WTC11 (cell line): ENCODE measurements at regions of chr1 and their contacts with region 1.

Region 1: GRCh38 chr1:183281553-183282091 is 95.6 kb downstream of the LAMC2 start:
- DNase-seq: peak; percentile 96
- ATAC-seq: peak; percentile 87
- H3K4me3 Mint-ChIP-seq: no peak overlapping the region
- H3K27ac Mint-ChIP-seq: peak overlapping the region; percentile 48; the same call in 1 of the 2 replicates
- H3K4me1 Mint-ChIP-seq: peaks cover 42% of the 10 kb centered on the region
- H3K27me3 Mint-ChIP-seq: no peaks in the 10 kb centered on the region
- CTCF ChIP-seq: peak; percentile 81

Region 2: DNA sequence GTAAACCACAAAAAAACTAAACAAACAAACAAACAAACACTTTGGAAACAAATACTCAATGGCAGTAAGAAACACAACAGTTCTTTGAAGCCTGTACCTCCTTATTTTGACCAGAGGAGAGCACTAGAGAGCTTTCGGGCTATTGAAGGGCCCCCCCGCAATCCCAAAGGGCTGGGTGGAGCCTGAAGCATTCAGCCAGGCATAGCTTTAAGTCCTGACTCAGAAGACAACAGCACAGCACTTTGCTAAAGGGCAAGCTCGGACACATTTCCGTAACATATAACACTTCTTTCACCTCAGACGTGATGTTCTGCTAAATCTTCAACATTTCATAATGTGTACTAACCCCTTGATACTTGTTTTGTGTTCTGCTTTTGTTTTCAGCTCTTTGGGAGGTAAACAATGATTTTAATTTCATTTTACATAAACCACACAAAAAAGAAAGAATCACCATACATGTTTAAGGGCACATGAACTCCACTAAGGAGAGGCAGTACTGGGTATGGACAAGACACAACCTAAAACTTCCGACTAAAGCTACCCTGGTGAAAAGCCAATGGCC is 319.0 kb before region 1 on chr1:
- CTCF ChIA-PET with region 1: interaction called, 12 read pairs
- POLR2A ChIA-PET with region 1: no interaction called
- DNase-seq: peak; percentile 69
- ATAC-seq: peak; percentile 87
- H3K4me3 Mint-ChIP-seq: peak overlapping the region; percentile 5; the same call in 1 of the 2 replicates
- H3K27ac Mint-ChIP-seq: peak overlapping the region; percentile 84
- H3K4me1 Mint-ChIP-seq: peaks cover 34% of the 10 kb centered on the region
- H3K27me3 Mint-ChIP-seq: peaks cover 12% of the 10 kb centered on the region
- CTCF ChIP-seq: peak; percentile 64

Region 3: GRCh38 chr1:183198463-183198862 is 83.2 kb before region 1 on chr1:
- CTCF ChIA-PET with region 1: no interaction called
- POLR2A ChIA-PET with region 1: no interaction called
- DNase-seq: no peak
- ATAC-seq: no peak
- H3K4me3 Mint-ChIP-seq: no peak overlapping the region
- H3K27ac Mint-ChIP-seq: peak overlapping the region; percentile 24; the same call in 1 of the 2 replicates
- H3K4me1 Mint-ChIP-seq: peaks cover 29% of the 10 kb centered on the region
- H3K27me3 Mint-ChIP-seq: no peaks in the 10 kb centered on the region
- CTCF ChIP-seq: no peak

Region 4: GRCh38 chr1:183227963-183228649 is 53.5 kb before region 1 on chr1:
- CTCF ChIA-PET with region 1: interaction called, 10 read pairs
- POLR2A ChIA-PET with region 1: no interaction called
- DNase-seq: peak; percentile 85
- ATAC-seq: peak; percentile 95
- H3K4me3 Mint-ChIP-seq: no peak overlapping the region
- H3K27ac Mint-ChIP-seq: no peak overlapping the region
- H3K4me1 Mint-ChIP-seq: peaks cover 26% of the 10 kb centered on the region
- H3K27me3 Mint-ChIP-seq: no peaks in the 10 kb centered on the region
- CTCF ChIP-seq: peak; percentile 60

Region 5: GRCh38 chr1:183263886-183264593 is 17.6 kb before region 1 on chr1:
- CTCF ChIA-PET with region 1: no interaction called
- POLR2A ChIA-PET with region 1: no interaction called
- DNase-seq: no peak
- ATAC-seq: no peak
- H3K4me3 Mint-ChIP-seq: no peak overlapping the region
- H3K27ac Mint-ChIP-seq: no peak overlapping the region
- H3K4me1 Mint-ChIP-seq: peaks cover 25% of the 10 kb centered on the region
- H3K27me3 Mint-ChIP-seq: no peaks in the 10 kb centered on the region
- CTCF ChIP-seq: no peak

Region 6: GRCh38 chr1:183291802-183292514 is 10.3 kb after region 1 on chr1:
- CTCF ChIA-PET with region 1: interaction called, 21 read pairs
- POLR2A ChIA-PET with region 1: no interaction called
- DNase-seq: no peak
- ATAC-seq: peak; percentile 78
- H3K4me3 Mint-ChIP-seq: no peak overlapping the region
- H3K27ac Mint-ChIP-seq: peak overlapping the region; percentile 71
- H3K4me1 Mint-ChIP-seq: peaks cover 29% of the 10 kb centered on the region
- H3K27me3 Mint-ChIP-seq: no peaks in the 10 kb centered on the region; the same call in 1 of the 2 replicates
- CTCF ChIP-seq: no peak

Region 7: GRCh38 chr1:183306317-183307042 is 24.9 kb after region 1 on chr1:
- CTCF ChIA-PET with region 1: interaction called, 25 read pairs
- POLR2A ChIA-PET with region 1: no interaction called
- DNase-seq: no peak
- ATAC-seq: peak; percentile 68
- H3K4me3 Mint-ChIP-seq: no peak overlapping the region
- H3K27ac Mint-ChIP-seq: no peak overlapping the region
- H3K4me1 Mint-ChIP-seq: peaks cover 51% of the 10 kb centered on the region
- H3K27me3 Mint-ChIP-seq: peaks cover 3% of the 10 kb centered on the region
- CTCF ChIP-seq: peak; percentile 32; the same call in 1 of the 2 replicates

Region 8: DNA sequence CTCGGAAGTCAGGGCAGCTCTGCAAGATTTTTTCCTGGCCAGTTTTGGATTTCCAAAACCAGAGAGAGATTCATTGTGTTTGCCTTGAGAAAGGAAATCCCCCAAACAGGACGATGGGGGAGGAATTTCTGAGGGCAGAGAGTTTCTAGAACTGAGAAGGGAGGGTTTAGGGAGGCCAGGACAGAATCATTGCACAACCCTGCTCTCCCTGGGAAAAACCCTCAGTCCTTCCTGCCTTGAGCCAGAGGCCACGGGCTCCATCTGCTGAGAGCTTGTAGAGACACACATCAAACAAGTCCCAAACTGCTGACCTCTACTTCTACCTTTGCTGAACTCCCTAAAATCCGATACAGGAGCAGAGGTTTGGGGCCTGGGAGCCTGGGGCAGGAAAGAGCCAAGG is 36.8 kb after region 1 on chr1:
- CTCF ChIA-PET with region 1: interaction called, 27 read pairs
- POLR2A ChIA-PET with region 1: no interaction called
- DNase-seq: peak; percentile 45
- ATAC-seq: peak; percentile 76
- H3K4me3 Mint-ChIP-seq: no peak overlapping the region
- H3K27ac Mint-ChIP-seq: no peak overlapping the region
- H3K4me1 Mint-ChIP-seq: peaks cover 55% of the 10 kb centered on the region
- H3K27me3 Mint-ChIP-seq: peaks cover 8% of the 10 kb centered on the region
- CTCF ChIP-seq: no peak

Region 9: DNA sequence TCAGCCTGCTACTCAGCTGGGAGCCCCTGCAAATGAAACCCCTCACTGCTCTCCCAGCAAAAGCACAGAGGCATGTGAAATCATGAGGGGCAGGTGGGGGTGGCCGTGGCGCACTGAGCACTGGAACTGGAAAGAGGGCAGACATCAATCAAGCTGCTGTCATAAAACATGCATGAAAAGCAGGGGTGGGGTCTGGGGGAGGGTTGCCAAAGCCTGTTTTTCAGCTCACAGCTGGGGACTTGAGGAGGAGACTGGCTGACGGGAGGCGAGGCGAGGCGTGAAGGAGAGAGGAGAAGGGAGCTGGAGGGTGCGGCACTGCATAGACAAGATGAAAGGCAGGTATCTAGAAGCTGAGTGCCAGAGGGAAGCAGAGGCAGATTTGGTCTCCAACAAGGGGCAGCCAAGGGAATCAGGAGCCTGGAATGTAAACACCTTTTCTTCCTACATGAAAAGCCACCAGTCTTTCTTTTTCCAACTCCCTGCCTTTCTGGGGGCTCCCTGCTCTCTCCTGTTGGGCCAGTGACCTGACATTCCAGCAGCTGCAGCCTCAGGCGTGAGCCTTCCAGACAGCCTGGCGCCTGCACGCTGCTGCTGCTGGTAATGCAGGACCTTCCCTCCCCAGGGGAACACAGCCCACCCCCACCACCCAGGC is 49.6 kb after region 1 on chr1:
- CTCF ChIA-PET with region 1: interaction called, 11 read pairs
- POLR2A ChIA-PET with region 1: no interaction called
- DNase-seq: peak; percentile 53
- ATAC-seq: peak; percentile 81
- H3K4me3 Mint-ChIP-seq: peak overlapping the region; percentile 45
- H3K27ac Mint-ChIP-seq: peak overlapping the region; percentile 90
- H3K4me1 Mint-ChIP-seq: peaks cover 52% of the 10 kb centered on the region
- H3K27me3 Mint-ChIP-seq: no peaks in the 10 kb centered on the region
- CTCF ChIP-seq: no peak